Posterior cingulate gyrus (tissue), 11 donors: ENCODE measurements at regions of chr10 and their contacts with region 1.

Region 1: DNA sequence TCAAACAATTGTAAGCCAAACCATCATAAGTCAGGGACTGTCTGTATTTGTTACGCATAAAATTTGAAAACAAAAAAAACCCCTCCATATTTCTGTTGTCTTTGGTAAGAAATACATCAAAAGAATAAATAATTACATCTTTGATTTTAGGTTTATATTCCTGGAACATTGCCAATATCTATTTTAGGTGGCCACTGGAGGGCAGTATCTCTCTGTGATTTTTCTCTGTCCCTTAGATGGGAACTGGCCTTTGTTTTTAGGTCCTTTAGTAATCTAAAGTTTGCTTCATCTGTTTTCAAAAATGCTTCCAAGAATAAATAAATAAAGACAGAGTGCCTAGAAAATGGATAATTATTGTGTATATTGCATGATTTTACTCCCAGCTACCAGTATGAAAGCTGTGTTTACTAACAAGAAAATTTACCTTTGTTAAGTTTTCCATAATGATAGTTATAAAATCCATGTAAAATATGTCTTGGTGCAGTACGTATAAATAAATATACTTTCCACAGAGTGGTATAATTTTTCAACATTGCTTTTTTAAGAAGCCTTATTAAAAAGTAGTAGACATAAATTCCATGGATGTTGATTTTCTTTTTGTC is 64.2 kb downstream of the PHYHIPL start:
- DNase-seq: no peak

Region 2: GRCh38 chr10:58921421-58921855 is 319.2 kb before region 1 on chr10:
- intact Hi-C with region 1: no loop called
- DNase-seq: no peak

Region 3: DNA sequence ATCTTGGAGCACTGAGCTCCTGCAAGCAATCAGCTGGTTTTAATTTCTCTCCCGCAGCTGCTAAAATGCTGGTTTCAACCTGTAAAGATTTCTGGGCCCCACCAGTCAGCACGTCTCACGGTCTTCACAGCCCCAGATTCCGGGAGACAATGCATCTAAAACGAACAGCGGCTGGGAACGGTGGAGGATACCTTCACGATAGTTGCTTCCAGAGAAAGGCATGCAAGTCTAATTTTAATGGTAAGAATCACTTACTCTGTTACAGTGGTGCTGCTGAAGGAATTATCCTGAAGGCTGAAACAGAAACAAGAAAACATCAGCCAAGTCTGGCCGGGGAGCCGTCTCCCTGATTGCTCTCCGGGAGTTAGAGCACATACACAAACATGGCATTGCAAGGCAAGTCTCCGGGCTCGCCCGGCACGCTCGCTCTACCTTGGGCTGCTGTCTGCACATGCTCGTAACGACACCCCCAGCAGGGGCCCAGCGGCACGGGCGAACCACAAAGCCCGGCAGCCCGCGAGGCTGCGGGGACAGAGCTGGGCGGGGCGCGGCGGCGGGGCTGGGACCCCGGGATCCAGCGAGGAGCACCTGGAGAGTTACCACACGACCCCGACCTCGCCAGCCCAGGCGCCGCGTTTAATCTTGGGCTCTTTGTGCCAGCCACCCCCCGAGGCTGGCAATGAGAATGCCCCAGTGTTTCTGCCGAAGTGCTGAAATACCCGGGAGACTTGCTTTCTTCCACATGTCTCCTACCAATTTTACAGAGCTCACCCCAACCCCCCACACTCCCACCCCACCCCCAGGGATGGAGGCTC is 121.7 kb after region 1 on chr10 and contains the start of gene FAM13C:
- intact Hi-C with region 1: loop called (anchors 10 kb)
- DNase-seq: peak; percentile 66 to 97 (median 80)

Region 4: DNA sequence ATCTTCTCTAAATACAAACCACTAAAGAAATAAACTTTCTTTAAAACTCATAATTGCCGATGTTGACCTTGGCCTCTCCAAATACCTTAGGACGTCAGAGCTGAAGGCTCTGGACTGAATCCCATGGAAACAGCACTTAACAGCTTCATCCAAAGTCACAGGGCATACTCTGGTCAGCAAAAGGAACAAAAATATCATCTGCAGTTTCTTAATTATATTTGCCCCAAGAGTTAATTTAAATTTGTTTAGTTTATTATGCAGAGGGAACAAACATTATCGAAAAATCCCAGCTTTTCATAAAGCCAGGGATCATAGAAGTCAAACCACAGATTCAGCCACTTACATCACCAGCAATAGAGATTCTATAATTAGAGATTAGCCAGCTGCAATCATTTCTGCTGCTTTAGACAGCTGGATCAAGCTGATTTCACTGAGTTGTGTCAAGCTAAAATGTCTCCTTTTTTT is 142.2 kb after region 1 on chr10:
- intact Hi-C with region 1: no loop called
- DNase-seq: no peak

Region 5: DNA sequence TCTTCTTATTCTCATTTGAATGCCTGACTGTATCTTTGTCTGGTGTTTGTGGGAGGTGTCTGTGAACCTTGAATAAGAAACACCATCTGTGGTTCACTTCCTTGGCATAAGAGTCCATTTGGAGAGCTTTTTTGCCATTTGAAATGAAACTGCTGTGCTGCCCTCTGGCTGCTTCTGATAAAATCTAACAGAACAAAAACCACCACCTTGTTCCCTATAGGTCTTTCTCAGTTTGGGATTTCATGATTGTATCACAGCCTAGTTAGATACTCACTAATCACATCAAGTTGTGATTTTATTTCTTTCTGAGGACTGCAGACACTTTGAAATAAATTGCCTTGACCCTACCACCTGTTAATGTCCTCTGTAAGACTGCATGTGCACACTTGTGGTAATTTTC is 224.4 kb after region 1 on chr10:
- intact Hi-C with region 1: loop called (anchors 2 kb)
- DNase-seq: peak in 3 of 10 donors; percentile 11 to 40 (median 39)